Activated CD8-positive, alpha-beta T cell treated with anti-CD3 and anti-CD28 coated beads, Interleukin-2, amount 10 ng/mL, durations not matched to agents 7 days and 5 days (primary cell): ENCODE measurements at regions of chr22 and their contacts with region 1.

Region 1: GRCh38 chr22:40463017-40463631 is 92.7 kb downstream of the SGSM3 start:
- DNase-seq: peak; percentile 72
- ATAC-seq: peak; percentile 83
- H3K4me3 Mint-ChIP-seq: peak overlapping the region; percentile 96
- H3K27ac Mint-ChIP-seq: peak overlapping the region; percentile 97
- H3K4me1 Mint-ChIP-seq: peaks cover 39% of the 10 kb centered on the region
- H3K27me3 Mint-ChIP-seq: no peaks in the 10 kb centered on the region

Region 2: DNA sequence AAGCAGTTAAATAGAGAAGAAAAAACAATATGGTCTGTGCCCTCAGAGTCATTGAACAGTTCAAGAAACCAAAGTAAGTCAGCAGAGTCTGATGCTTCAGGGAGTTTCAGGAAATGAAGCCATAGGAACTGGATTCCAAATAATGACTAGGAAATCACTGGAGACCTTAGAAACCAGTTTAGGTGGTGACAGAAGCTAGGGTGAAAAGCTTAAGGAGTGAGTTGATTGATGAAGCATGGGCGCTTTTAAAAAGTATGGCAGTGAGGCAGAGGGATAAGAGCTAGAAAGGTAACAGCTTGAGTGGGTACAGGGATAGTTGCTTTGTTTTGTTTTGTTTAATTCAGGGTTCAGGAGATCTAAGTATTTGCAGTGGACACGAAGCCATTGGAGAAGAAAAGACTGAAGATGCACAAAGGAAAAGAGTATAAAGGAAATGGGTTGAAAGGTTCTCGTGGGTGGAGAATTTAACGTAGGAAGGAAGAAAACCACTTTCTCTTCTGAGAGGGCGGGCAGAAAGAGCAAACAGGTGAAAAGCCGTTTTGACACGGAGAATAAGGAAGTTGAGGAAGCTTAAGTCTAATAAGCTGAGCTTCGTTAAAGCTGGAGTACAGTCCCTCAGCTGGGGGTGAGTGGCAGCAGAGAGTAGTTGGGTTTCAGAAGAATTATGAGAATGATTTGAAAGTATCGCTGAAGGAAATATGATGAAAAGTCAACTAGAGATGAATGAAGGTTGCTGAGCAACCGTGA is 77.9 kb before region 1 on chr22:
- CTCF ChIA-PET with region 1: no interaction called
- POLR2A ChIA-PET with region 1: no interaction called
- DNase-seq: peak; percentile 63
- ATAC-seq: peak; percentile 84
- H3K4me3 Mint-ChIP-seq: peak overlapping the region; percentile 71
- H3K27ac Mint-ChIP-seq: peak overlapping the region; percentile 95
- H3K4me1 Mint-ChIP-seq: peaks cover 45% of the 10 kb centered on the region
- H3K27me3 Mint-ChIP-seq: no peaks in the 10 kb centered on the region

Region 3: GRCh38 chr22:40418366-40419201 is 44.5 kb before region 1 on chr22:
- CTCF ChIA-PET with region 1: no interaction called
- POLR2A ChIA-PET with region 1: no interaction called
- DNase-seq: peak; percentile 35
- ATAC-seq: peak; percentile 21
- H3K4me3 Mint-ChIP-seq: no peak overlapping the region
- H3K27ac Mint-ChIP-seq: no peak overlapping the region
- H3K4me1 Mint-ChIP-seq: peaks cover 45% of the 10 kb centered on the region
- H3K27me3 Mint-ChIP-seq: no peaks in the 10 kb centered on the region

Region 4: DNA sequence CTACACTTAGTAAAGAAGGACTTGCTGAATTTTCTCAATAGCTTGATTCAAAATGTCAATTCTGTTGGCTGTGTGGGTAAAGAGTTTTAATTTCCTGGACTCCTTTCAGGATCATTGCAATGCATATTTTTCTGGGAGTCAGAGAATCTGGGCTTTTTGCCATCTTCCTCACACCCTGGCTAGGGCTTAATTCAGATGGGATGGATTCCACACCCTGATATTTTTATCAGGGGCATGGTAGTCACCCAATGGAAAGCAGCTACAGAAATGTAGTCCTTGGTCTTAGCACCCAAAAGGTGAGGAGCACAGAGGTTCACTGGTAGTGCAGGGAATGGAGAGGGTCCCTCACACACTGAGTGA is 13.5 kb before region 1 on chr22:
- CTCF ChIA-PET with region 1: interaction called, 11 read pairs
- POLR2A ChIA-PET with region 1: interaction called, 4 read pairs
- DNase-seq: no peak
- ATAC-seq: no peak
- H3K4me3 Mint-ChIP-seq: no peak overlapping the region
- H3K27ac Mint-ChIP-seq: no peak overlapping the region
- H3K4me1 Mint-ChIP-seq: peaks cover 47% of the 10 kb centered on the region
- H3K27me3 Mint-ChIP-seq: no peaks in the 10 kb centered on the region

Region 5: DNA sequence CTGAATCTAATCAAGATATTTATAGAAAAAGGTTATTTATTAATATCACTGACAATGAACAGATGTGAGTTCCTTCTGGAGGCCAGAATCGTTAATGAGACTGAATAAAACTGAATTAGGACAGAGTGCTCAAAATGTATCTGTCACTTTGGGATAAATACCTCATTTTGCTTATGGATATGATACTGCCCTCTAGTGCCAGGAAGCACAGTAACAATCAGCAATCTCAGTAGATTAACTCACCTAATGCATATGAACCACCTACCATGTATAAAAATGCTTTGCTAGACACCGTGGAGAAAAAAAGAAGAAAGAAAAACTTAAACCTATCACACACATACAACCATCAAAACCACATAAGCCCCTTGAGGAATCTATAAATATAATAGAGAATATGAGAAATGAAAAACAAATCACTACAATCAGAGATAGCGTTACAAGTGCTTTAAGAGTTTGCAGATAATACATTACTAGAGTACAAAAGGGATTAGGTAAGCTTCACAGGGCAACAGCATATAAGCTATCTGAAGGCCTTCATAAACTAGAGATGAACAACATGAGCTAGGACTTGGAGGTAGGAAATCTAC is 24.6 kb after region 1 on chr22:
- CTCF ChIA-PET with region 1: interaction called, 26 read pairs
- POLR2A ChIA-PET with region 1: interaction called, 4 read pairs
- DNase-seq: peak; percentile 29
- ATAC-seq: peak; percentile 62
- H3K4me3 Mint-ChIP-seq: no peak overlapping the region
- H3K27ac Mint-ChIP-seq: no peak overlapping the region
- H3K4me1 Mint-ChIP-seq: peaks cover 34% of the 10 kb centered on the region
- H3K27me3 Mint-ChIP-seq: no peaks in the 10 kb centered on the region